ENCODE measurements at regions of chr1 and their contacts with region 1.

Region 1: GRCh38 chr1:6235296-6235677 is 477 bp downstream of the ICMT start:
- DNase-seq: no peak
- H3K4me3 ChIP-seq: peak overlapping the region; percentile 77 to 94 (median 86)
- H3K27ac ChIP-seq: peak overlapping the region; percentile 2; the same call in 1 of the 2 replicates
- H3K4me1 ChIP-seq: peaks cover 4 to 25% (median 19%) of the 10 kb centered on the region in 4 experiments
- H3K27me3 ChIP-seq: no peaks in the 10 kb centered on the region
- CTCF ChIP-seq: no peak
- EP300 ChIP-seq: no peak
- POLR2A ChIP-seq: no peak
- RAD21 ChIP-seq: no peak

Region 2: DNA sequence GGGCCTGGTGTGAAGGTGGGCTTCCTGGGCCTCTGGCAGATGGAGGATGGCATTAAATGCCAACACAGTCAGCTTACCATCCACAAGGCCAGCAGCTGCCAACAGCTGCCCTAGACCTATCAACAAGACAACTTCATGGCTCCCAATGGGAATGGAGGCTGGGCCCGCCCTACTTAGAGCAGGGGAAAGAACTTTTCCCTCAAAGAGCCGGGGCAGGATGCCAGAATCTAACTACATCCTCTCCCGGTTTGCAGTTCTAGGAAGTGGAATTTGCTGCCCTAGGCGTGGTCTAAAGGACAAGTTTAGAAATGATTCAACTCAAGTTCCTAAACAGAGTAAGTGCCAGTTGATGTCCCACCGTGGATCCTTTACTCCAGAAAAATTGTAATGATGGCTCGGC is 12.7 kb before region 1 on chr1:
- CTCF ChIA-PET with region 1: interaction called, 30 read pairs
- POLR2A ChIA-PET with region 1: interaction called, 20 read pairs
- DNase-seq: no peak
- H3K4me3 ChIP-seq: no peak overlapping the region
- H3K27ac ChIP-seq: no peak overlapping the region
- H3K4me1 ChIP-seq: no peaks in the 10 kb centered on the region; a peak in 1 of 7 replicates
- H3K27me3 ChIP-seq: no peaks in the 10 kb centered on the region
- CTCF ChIP-seq: no peak
- EP300 ChIP-seq: no peak
- POLR2A ChIP-seq: no peak
- RAD21 ChIP-seq: no peak

Region 3: GRCh38 chr1:6300342-6301048 is 65.2 kb after region 1 on chr1:
- CTCF ChIA-PET with region 1: no interaction called
- POLR2A ChIA-PET with region 1: no interaction called
- DNase-seq: no peak
- H3K4me3 ChIP-seq: no peak overlapping the region
- H3K27ac ChIP-seq: no peak overlapping the region
- H3K4me1 ChIP-seq: no peaks in the 10 kb centered on the region
- H3K27me3 ChIP-seq: no peaks in the 10 kb centered on the region
- CTCF ChIP-seq: peak in 1 of 3 experiments; percentile 11; a peak in 1 of 4 replicates
- EP300 ChIP-seq: no peak
- POLR2A ChIP-seq: no peak
- RAD21 ChIP-seq: no peak